Naive thymus-derived CD8-positive, alpha-beta T cell (primary cell): ENCODE measurements at regions of chr11 and their contacts with region 1.

Region 1: GRCh38 chr11:65134386-65135253 is at the start of gene SYVN1:
- DNase-seq: peak; percentile 84 to 97 (median 90)
- ATAC-seq: peak; percentile 89 to 90
- H3K4me3 Mint-ChIP-seq: peak within 1 kb of the TSS; percentile 94 to 100 (median 98)
- H3K27ac Mint-ChIP-seq: peak within 1 kb of the TSS; percentile 99 to 100 (median 100)
- H3K4me1 Mint-ChIP-seq: peaks cover 26 to 57% (median 45%) of the 10 kb centered on the region in 4 donors
- H3K27me3 Mint-ChIP-seq: no peaks in the 10 kb centered on the region
- polyA plus RNA-seq, gene SYVN1: 7.9 to 10.6 (median 8.2) TPM

Region 2: DNA sequence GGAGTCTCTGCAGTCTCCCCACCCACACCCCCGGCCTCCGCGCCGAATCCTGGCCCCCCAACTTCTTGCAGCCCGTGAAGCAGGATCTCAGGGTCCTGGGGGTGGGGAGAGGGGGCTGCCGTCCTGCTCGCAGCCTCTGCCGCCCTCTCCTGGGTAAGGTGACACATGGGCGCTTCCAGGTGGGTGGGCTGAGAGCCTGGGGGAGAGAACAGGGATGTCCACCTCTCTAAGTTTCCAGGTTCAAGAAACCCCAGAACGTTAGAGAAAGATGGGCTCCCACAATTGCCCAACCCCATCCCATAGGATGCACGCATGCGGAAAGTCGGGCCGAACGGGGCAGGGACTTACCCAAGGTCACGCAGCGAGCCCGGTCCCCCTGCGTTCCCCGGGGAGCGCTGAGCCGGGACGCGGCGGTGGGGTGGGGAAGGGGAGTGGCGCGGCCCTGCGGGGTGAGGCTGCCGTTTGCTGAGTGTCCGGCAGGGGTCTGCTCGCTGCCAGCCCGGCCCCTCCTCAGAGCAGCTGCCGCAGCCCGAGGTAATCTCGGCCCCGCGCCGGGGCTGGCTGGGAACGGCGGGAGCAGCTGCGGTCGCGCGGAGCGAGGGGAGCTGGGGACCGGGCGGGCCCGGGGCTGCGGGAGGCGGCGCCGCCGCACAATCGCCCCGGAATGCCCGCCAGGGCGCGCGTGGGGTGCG is 46.4 kb after region 1 on chr11:
- POLR2A ChIA-PET with region 1: interaction called, 26 read pairs
- DNase-seq: peak; percentile 36 to 77 (median 55)
- ATAC-seq: peak; percentile 75 to 82
- H3K4me3 Mint-ChIP-seq: peak overlapping the region; percentile 85 to 96 (median 89)
- H3K27ac Mint-ChIP-seq: peak overlapping the region; percentile 75 to 92 (median 86)
- H3K4me1 Mint-ChIP-seq: peaks cover 9 to 34% (median 27%) of the 10 kb centered on the region in 4 donors
- H3K27me3 Mint-ChIP-seq: no peaks in the 10 kb centered on the region

Region 3: DNA sequence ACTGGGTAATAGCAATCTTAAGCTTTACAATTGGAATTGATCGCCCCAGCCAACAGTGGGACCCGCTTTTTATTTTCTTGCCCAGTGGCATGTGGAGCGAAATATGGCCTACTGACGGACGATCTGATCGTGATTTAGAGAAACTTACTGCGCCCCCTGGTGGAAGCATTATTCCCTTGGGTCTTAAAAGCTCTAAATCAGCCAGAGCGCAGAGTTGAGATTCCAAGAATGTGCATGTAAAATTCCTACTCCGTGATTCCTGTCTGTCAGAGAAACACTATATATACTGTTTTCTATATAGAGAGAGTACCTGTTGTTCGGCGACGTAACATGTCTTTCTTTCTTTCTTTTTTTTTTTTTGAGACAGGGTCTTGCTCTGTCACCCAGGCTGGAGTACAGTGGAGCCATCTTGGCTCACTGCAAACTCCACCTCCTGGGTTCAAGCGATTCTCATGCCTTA is 195.4 kb after region 1 on chr11:
- POLR2A ChIA-PET with region 1: interaction called, 13 read pairs
- DNase-seq: peak; percentile 63 to 92 (median 78)
- ATAC-seq: peak; percentile 19 to 24
- H3K4me3 Mint-ChIP-seq: peak overlapping the region in 3 of 10 donors; percentile 20 to 50 (median 26)
- H3K27ac Mint-ChIP-seq: peak overlapping the region in 9 of 10 donors; percentile 19 to 85 (median 71)
- H3K4me1 Mint-ChIP-seq: peaks cover 14 to 23% (median 19%) of the 10 kb centered on the region in 4 donors
- H3K27me3 Mint-ChIP-seq: peaks cover 0 to 4% (median 0%) of the 10 kb centered on the region in 5 donors